ENCODE measurements at regions of chr1 and their contacts with region 1.

Region 1: DNA sequence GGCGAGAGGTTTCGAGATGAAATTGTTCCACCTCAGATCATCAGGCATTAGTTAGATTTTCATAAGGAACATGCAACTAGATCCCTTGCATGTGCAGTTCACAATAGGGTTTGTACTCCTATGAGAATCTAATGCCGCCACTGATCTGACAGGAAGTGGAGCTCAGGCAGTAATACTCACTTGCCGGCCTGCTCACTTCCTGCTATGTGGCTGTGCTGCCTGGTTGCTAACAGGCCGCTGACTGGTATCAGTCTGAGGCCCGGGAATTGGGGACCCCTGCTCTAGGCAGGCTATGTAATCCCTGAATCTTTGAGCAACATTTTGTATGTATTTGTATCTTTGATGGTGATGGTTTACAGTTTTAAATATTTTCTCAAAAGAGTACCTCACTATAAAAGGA is 32.5 kb downstream of the XKR8 start:
- DNase-seq: peak; percentile 47 to 68 (median 56)
- H3K4me3 ChIP-seq: no peak overlapping the region
- H3K4me3 Mint-ChIP-seq: peak overlapping the region in 7 of 8 donors; percentile 17 to 86 (median 58)
- H3K27ac ChIP-seq: peak overlapping the region; percentile 65
- H3K27ac Mint-ChIP-seq: peak overlapping the region; percentile 64 to 99 (median 87)
- H3K4me1 ChIP-seq: peaks cover 31% of the 10 kb centered on the region
- H3K4me1 Mint-ChIP-seq: peaks cover 25 to 39% (median 31%) of the 10 kb centered on the region in 4 donors
- H3K27me3 ChIP-seq: no peaks in the 10 kb centered on the region
- H3K27me3 Mint-ChIP-seq: no peaks in the 10 kb centered on the region

Region 2: DNA sequence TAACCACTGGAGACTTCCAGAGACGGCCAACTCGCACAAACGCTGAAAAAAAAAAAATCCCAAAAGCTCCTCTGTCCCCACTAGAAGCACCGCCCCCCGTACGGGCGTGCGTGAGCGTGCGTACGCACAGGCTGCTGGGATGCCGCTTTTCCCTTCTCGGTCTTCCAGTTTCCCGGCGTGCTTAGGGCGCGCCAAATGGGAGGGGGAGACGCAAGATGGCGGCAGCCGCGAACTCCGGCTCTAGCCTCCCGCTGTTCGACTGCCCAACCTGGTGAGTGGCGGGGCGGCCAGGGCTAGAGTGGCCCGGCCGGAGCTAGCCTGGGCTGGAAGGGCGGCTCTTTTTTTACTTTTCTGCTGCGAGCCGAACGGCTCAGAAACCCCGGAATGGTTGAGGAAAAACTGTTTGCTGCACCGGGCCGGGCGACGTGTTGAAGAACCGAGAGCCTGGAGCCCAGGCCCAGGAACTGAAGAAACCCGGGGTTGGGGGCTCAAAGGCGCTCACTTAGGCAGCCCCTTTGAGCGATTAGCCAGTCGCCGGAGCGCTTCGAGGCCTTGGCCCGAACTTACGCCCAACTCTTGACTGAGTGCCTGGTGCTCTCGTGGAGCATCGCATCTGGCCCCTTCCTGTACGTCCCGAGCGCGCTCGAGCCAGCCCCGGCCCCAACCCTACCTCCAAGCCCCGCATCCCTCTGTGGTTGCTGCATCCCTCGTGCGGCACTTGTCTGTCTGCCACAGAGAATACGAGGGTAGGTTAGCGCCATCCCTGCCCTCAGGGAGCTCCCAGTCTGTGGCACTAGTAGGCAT is 161.5 kb before region 1 on chr1 and contains the start of gene PPP1R8:
- CTCF ChIA-PET with region 1: no interaction called
- POLR2A ChIA-PET with region 1: interaction called, 13 read pairs
- intact Hi-C with region 1: no loop called
- DNase-seq: peak; percentile 83 to 90 (median 86)
- H3K4me3 ChIP-seq: peak within 1 kb of the TSS; percentile 76 to 84
- H3K4me3 Mint-ChIP-seq: peak within 1 kb of the TSS; percentile 93 to 97 (median 94)
- H3K27ac ChIP-seq: peak within 1 kb of the TSS; percentile 73
- H3K27ac Mint-ChIP-seq: peak within 1 kb of the TSS; percentile 91 to 97 (median 93)
- H3K4me1 ChIP-seq: peaks cover 44% of the 10 kb centered on the region
- H3K4me1 Mint-ChIP-seq: peaks cover 21 to 46% (median 31%) of the 10 kb centered on the region in 4 donors
- H3K27me3 ChIP-seq: no peaks in the 10 kb centered on the region
- H3K27me3 Mint-ChIP-seq: no peaks in the 10 kb centered on the region
- total RNA-seq, gene PPP1R8: 40.8 to 45.8 TPM

Region 3: GRCh38 chr1:27959400-27960217 is 32.7 kb before region 1 on chr1 and contains the start of gene XKR8:
- CTCF ChIA-PET with region 1: no interaction called
- POLR2A ChIA-PET with region 1: interaction called, 19 read pairs
- intact Hi-C with region 1: no loop called
- DNase-seq: peak; percentile 84 to 88 (median 85)
- H3K4me3 ChIP-seq: peak within 1 kb of the TSS; percentile 63 to 73
- H3K4me3 Mint-ChIP-seq: peak within 1 kb of the TSS; percentile 87 to 92 (median 89)
- H3K27ac ChIP-seq: peak within 1 kb of the TSS; percentile 83
- H3K27ac Mint-ChIP-seq: peak within 1 kb of the TSS; percentile 81 to 94 (median 92)
- H3K4me1 ChIP-seq: peaks cover 32% of the 10 kb centered on the region
- H3K4me1 Mint-ChIP-seq: peaks cover 17 to 40% (median 25%) of the 10 kb centered on the region in 4 donors
- H3K27me3 ChIP-seq: no peaks in the 10 kb centered on the region
- H3K27me3 Mint-ChIP-seq: no peaks in the 10 kb centered on the region
- total RNA-seq, gene XKR8: 13.1 to 14.5 TPM

Region 4: DNA sequence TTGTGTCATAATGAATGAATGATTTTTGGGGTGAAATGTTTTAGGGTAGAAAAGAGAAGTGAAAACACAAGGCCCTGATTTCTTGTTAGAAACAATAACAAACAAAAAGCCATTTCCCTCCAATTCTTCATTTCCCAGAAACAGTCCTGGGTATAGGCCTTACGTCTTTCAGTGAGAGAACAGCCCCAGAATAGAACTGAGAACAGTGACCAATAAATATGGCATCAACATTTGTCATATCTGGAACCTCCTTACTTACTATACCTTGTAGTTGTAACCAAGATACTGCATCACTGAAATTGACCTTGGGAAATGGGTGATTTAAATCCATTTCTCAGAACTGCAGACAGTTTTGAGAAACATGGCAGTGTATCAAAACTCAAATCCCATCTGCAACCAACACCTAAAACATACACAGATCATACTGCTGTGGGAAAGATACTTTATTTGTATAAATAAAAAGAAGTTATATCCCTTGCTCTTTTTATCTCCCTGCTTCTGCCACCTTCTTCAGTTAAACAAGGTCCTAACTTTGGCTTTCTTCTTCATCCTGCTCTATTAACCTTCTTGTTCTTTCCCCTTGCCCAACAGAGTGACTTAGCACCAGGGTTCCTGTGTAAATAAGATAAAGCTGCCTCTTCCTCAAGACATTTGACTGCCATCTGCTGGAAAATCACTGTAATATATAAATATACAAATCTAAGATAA is 13.0 kb before region 1 on chr1:
- CTCF ChIA-PET with region 1: interaction called, 11 read pairs
- POLR2A ChIA-PET with region 1: interaction called, 11 read pairs
- intact Hi-C with region 1: no loop called
- DNase-seq: peak in 4 of 5 donors; percentile 49 to 56 (median 53)
- H3K4me3 ChIP-seq: no peak overlapping the region
- H3K4me3 Mint-ChIP-seq: no peak overlapping the region
- H3K27ac ChIP-seq: no peak overlapping the region
- H3K27ac Mint-ChIP-seq: no peak overlapping the region
- H3K4me1 ChIP-seq: no peaks in the 10 kb centered on the region
- H3K4me1 Mint-ChIP-seq: no peaks in the 10 kb centered on the region
- H3K27me3 ChIP-seq: no peaks in the 10 kb centered on the region
- H3K27me3 Mint-ChIP-seq: no peaks in the 10 kb centered on the region

Region 5: GRCh38 chr1:28176492-28177470 is 184.5 kb after region 1 on chr1 and contains the start of gene PTAFR:
- CTCF ChIA-PET with region 1: no interaction called
- POLR2A ChIA-PET with region 1: no interaction called
- intact Hi-C with region 1: no loop called
- DNase-seq: no peak
- H3K4me3 ChIP-seq: no peak within 1 kb of the TSS
- H3K4me3 Mint-ChIP-seq: no peak within 1 kb of the TSS
- H3K27ac ChIP-seq: no peak within 1 kb of the TSS
- H3K27ac Mint-ChIP-seq: no peak within 1 kb of the TSS
- H3K4me1 ChIP-seq: peaks cover 30% of the 10 kb centered on the region
- H3K4me1 Mint-ChIP-seq: peaks cover 16 to 33% (median 25%) of the 10 kb centered on the region in 4 donors
- H3K27me3 ChIP-seq: no peaks in the 10 kb centered on the region
- H3K27me3 Mint-ChIP-seq: peaks cover 2% of the 10 kb centered on the region in 2 donors
- total RNA-seq, gene PTAFR: 1.2 to 1.7 TPM